H1 (cell line): ENCODE measurements at regions of chr5 and their contacts with region 1.

Region 1: GRCh38 chr5:72079296-72079695 is 28.0 kb upstream of the MAP1B start:
- DNase-seq: peak in 1 of 2 experiments; percentile 58
- H3K4me3 ChIP-seq: no peak overlapping the region
- H3K27ac ChIP-seq: no peak overlapping the region
- H3K4me1 ChIP-seq: peaks cover 0 to 2% (median under 1%) of the 10 kb centered on the region in 4 experiments; a peak in 2 of 7 replicates
- H3K27me3 ChIP-seq: no peaks in the 10 kb centered on the region
- CTCF ChIP-seq: peak; percentile 60 to 68 (median 62)
- EP300 ChIP-seq: no peak
- POLR2A ChIP-seq: no peak
- RAD21 ChIP-seq: peak; percentile 58 to 67

Region 2: GRCh38 chr5:72065751-72066255 is 13.5 kb before region 1 on chr5:
- CTCF ChIA-PET with region 1: interaction called, 25 read pairs
- POLR2A ChIA-PET with region 1: interaction called, 14 read pairs
- DNase-seq: peak; percentile 78 to 81
- H3K4me3 ChIP-seq: peak overlapping the region in 3 of 4 experiments; percentile 16 to 32 (median 30); a peak in 4 of 8 replicates
- H3K27ac ChIP-seq: peak overlapping the region; percentile 85; the same call in 1 of the 2 replicates
- H3K4me1 ChIP-seq: peaks cover 12 to 25% (median 20%) of the 10 kb centered on the region in 4 experiments
- H3K27me3 ChIP-seq: no peaks in the 10 kb centered on the region
- CTCF ChIP-seq: peak in 1 of 3 experiments; percentile 0; a peak in 1 of 4 replicates
- EP300 ChIP-seq: peak in 1 of 2 experiments; percentile 20; a peak in 1 of 3 replicates
- POLR2A ChIP-seq: no peak; a peak in 1 of 3 replicates
- RAD21 ChIP-seq: 0 out of 4 replicates have a peak, but pooled peaks of 1 of the 2 experiments have one; percentile 5

Region 3: GRCh38 chr5:72092074-72092473 is 12.8 kb after region 1 on chr5:
- CTCF ChIA-PET with region 1: interaction called, 10 read pairs
- POLR2A ChIA-PET with region 1: no interaction called
- DNase-seq: no peak
- H3K4me3 ChIP-seq: no peak overlapping the region
- H3K27ac ChIP-seq: no peak overlapping the region
- H3K4me1 ChIP-seq: no peaks in the 10 kb centered on the region
- H3K27me3 ChIP-seq: no peaks in the 10 kb centered on the region
- CTCF ChIP-seq: no peak
- EP300 ChIP-seq: no peak
- POLR2A ChIP-seq: no peak
- RAD21 ChIP-seq: no peak